Spleen (tissue), 13 donors: ENCODE measurements at regions of chr7 and their contacts with region 1.

Region 1: DNA sequence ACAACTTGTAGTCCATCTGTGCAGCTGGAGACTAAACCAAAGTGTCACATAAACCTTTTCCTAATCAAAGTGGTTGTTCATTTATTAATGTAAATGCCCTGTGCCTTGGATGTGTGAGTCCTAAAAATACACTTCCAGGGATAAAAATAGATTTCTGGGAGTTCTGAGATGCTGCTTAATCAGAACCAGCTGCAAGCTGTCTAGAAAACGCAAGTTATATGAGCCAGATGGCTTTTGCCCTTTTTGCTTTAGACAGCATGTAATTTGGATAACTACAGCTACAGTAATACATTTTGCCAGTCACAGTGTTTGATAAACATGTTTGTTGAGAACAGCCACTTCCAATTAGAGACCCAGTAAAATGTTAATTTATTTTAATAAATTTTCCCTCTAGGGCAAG is 185.1 kb upstream of the PRPS1L1 start:
- DNase-seq: no peak
- H3K4me3 ChIP-seq: no peak overlapping the region
- H3K27ac ChIP-seq: peak overlapping the region in 3 of 8 donors; percentile 23 to 28 (median 26)
- H3K4me1 ChIP-seq: peaks cover 0 to 24% (median 7%) of the 10 kb centered on the region in 6 donors
- H3K27me3 ChIP-seq: no peaks in the 10 kb centered on the region
- CTCF ChIP-seq: no peak
- POLR2A ChIP-seq: no peak

Region 2: GRCh38 chr7:18320971-18321567 is 108.3 kb after region 1 on chr7:
- intact Hi-C with region 1: loop called (anchors 10 kb)
- DNase-seq: no peak
- H3K4me3 ChIP-seq: no peak overlapping the region
- H3K27ac ChIP-seq: peak overlapping the region in 2 of 8 donors; percentile 15 to 43
- H3K4me1 ChIP-seq: peaks cover 0 to 44% (median 13%) of the 10 kb centered on the region in 6 donors
- H3K27me3 ChIP-seq: no peaks in the 10 kb centered on the region
- CTCF ChIP-seq: peak in 10 of 11 experiments; percentile 10 to 57 (median 48)
- POLR2A ChIP-seq: no peak